Thyroid gland (tissue), 4 donors: ENCODE measurements at regions of chr14 and their contacts with region 1.

Region 1: GRCh38 chr14:69931960-69932359 is 52.7 kb downstream of the SMOC1 start:
- DNase-seq: no peak
- H3K4me3 ChIP-seq: no peak overlapping the region
- H3K27ac ChIP-seq: no peak overlapping the region
- H3K4me1 ChIP-seq: peaks cover 3 to 6% of the 10 kb centered on the region in 2 donors
- H3K27me3 ChIP-seq: no peaks in the 10 kb centered on the region
- CTCF ChIP-seq: no peak
- POLR2A ChIP-seq: no peak

Region 2: DNA sequence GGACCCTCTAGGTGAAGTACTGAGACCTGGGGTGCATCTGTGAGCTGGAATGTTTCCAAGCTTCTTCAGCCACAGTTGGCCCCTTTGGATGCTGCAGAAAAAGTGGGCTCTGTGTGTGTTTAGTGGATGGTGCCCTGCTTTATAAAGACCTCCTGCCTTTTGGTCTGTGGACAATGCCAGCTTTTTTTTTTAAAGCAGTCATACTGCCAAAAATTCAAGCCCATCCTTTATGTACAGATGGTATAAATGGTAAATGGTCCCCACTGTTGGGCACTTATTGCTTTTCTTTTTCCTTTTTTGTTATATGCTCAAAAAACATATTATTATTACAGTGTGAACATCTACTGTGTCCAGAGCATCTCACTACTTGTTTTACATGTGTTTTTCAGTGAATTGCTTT is 28.3 kb after region 1 on chr14:
- intact Hi-C with region 1: loop called (anchors 2 kb)
- DNase-seq: no peak
- H3K4me3 ChIP-seq: no peak overlapping the region
- H3K27ac ChIP-seq: no peak overlapping the region
- H3K4me1 ChIP-seq: peaks cover 0 to 5% of the 10 kb centered on the region in 2 donors
- H3K27me3 ChIP-seq: no peaks in the 10 kb centered on the region
- CTCF ChIP-seq: no peak
- POLR2A ChIP-seq: no peak